ENCODE measurements at regions of chr2 and their contacts with region 1.

Region 1: DNA sequence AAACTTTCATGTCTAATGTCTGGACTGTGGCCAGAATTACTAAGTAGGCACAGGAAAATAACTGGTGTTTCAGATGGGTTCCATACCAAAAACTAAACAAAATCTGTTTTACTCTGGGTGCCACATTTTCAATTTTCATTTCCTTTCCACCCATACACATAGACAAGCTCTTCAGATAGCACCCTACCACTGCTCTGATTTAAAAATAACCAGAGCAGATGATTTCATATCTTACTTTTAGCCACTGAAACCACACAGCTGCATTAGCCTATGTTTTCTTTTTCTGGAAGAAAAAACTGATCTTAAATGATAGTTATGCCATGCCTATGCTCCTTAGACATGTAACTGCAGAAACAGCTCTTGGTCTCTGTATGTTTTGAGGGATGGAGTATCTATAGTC is 647.6 kb downstream of the CPS1 start:
- DNase-seq: no peak
- H3K4me3 ChIP-seq: no peak overlapping the region
- H3K27ac ChIP-seq: no peak overlapping the region
- H3K4me1 ChIP-seq: no peaks in the 10 kb centered on the region
- H3K27me3 ChIP-seq: no peaks in the 10 kb centered on the region
- CTCF ChIP-seq: no peak

Region 2: DNA sequence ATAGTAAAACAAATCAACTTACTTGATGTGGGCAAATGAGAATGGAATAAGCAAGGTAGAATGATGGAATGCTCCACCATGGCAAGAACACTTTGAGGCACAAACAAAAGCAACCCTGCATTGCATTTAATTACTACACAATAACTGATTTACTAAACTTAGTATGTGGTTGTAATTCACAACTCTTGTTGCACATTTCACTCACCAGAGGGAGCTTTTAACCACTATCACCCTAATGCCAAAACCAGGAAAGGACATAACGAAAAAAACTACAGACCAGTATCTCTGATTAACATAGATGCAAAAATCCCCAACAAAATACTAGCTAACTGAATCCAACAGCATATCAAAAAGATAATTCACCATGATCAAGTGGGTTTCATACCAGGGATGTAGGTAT is 12.2 kb after region 1 on chr2:
- CTCF ChIA-PET with region 1: no interaction called
- POLR2A ChIA-PET with region 1: interaction called, 13 read pairs
- intact Hi-C with region 1: no loop called
- DNase-seq: peak; percentile 50
- H3K4me3 ChIP-seq: no peak overlapping the region
- H3K27ac ChIP-seq: no peak overlapping the region
- H3K4me1 ChIP-seq: no peaks in the 10 kb centered on the region
- H3K27me3 ChIP-seq: no peaks in the 10 kb centered on the region
- CTCF ChIP-seq: peak; percentile 46

Measured in A673 (cell line).